ENCODE measurements at regions of chr6 and their contacts with region 1.

Region 1: DNA sequence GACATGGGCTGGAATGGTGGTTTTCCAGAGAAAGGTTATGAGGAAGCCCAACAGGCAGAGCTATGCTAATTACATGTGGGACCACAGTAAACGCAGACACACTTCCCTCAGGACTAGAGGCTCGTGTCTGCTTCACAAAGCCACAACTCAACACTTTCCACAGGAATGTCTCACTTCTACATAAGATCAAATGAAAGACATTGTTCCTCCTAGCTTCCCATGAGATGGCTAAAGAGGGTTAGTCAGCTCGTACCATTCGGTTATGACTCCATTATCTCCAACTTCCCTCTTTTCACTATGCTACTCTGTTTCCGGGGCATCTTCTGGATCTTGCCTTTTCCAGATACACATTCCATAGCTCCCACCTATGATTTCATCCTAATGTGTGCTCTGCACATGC is 29.1 kb upstream of the ZC3H12D start:
- DNase-seq: no peak
- H3K4me3 ChIP-seq: no peak overlapping the region
- H3K27ac ChIP-seq: no peak overlapping the region
- H3K4me1 ChIP-seq: no peaks in the 10 kb centered on the region
- H3K27me3 ChIP-seq: no peaks in the 10 kb centered on the region
- CTCF ChIP-seq: no peak

Region 2: GRCh38 chr6:148548065-148548748 is 965.7 kb before region 1 on chr6:
- intact Hi-C with region 1: no loop called
- DNase-seq: no peak
- H3K4me3 ChIP-seq: no peak overlapping the region
- H3K27ac ChIP-seq: no peak overlapping the region
- H3K4me1 ChIP-seq: no peaks in the 10 kb centered on the region
- H3K27me3 ChIP-seq: no peaks in the 10 kb centered on the region
- CTCF ChIP-seq: no peak

Region 3: GRCh38 chr6:148578245-148578732 is 935.6 kb before region 1 on chr6:
- intact Hi-C with region 1: loop called (anchors 10 kb)
- DNase-seq: peak; percentile 47
- H3K4me3 ChIP-seq: no peak overlapping the region
- H3K27ac ChIP-seq: no peak overlapping the region
- H3K4me1 ChIP-seq: no peaks in the 10 kb centered on the region
- H3K27me3 ChIP-seq: no peaks in the 10 kb centered on the region
- CTCF ChIP-seq: peak; percentile 67

Region 4: DNA sequence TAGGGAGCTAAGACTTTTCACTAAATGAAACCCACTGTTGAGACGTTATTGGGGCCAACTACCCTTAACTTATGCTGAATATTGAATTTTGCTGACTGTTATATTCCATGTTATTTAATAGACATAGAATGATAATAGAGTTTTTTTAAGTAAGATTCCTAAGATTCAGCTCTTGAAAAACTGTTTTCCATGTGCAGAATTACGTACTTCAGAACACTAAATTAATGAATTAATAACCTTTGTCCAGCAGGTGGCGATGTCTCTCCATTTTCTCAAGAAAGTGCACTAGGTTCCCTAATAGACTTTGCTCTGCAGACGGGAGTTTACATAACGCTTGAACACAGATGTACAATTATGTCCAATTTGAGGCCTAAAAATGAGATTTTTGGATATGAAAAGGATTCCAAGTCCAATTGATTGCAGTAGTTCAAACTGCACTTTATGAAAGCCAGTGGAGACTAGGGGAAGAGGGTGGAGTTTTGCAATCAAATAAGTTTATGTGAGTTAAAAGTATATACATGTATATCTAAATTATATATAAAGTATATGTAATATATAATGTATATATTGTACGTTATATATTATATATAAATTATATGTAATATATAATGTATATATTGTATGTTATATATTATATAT is 485.0 kb before region 1 on chr6:
- intact Hi-C with region 1: loop called (anchors 5 kb)
- DNase-seq: peak; percentile 76
- H3K4me3 ChIP-seq: no peak overlapping the region
- H3K27ac ChIP-seq: no peak overlapping the region
- H3K4me1 ChIP-seq: no peaks in the 10 kb centered on the region
- H3K27me3 ChIP-seq: no peaks in the 10 kb centered on the region
- CTCF ChIP-seq: peak; percentile 37

Region 5: DNA sequence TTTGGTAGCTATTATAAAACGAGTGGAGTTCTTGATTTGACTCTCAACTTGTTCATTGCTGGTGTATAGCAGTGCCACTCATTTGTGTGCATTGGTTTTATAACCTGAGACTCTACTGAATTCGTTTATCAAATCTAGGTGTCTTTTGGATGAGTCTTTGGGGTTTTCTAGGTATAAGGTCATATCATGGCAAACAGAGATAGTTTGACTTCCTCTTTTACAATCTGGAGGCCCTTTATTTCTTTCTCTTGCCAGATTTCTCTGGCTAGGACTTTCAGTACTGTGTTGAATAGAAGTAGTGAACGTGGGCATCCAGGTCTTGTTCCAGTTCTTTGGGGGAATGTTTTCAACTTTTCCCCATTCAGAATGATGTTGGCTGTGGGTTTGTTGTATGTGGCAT is 75.1 kb before region 1 on chr6:
- intact Hi-C with region 1: loop called (anchors 5 kb)
- DNase-seq: no peak
- H3K4me3 ChIP-seq: no peak overlapping the region
- H3K27ac ChIP-seq: no peak overlapping the region
- H3K4me1 ChIP-seq: no peaks in the 10 kb centered on the region
- H3K27me3 ChIP-seq: no peaks in the 10 kb centered on the region
- CTCF ChIP-seq: no peak